MCF 10A (cell line): ENCODE measurements at regions of chr12 and their contacts with region 1.

Region 1: DNA sequence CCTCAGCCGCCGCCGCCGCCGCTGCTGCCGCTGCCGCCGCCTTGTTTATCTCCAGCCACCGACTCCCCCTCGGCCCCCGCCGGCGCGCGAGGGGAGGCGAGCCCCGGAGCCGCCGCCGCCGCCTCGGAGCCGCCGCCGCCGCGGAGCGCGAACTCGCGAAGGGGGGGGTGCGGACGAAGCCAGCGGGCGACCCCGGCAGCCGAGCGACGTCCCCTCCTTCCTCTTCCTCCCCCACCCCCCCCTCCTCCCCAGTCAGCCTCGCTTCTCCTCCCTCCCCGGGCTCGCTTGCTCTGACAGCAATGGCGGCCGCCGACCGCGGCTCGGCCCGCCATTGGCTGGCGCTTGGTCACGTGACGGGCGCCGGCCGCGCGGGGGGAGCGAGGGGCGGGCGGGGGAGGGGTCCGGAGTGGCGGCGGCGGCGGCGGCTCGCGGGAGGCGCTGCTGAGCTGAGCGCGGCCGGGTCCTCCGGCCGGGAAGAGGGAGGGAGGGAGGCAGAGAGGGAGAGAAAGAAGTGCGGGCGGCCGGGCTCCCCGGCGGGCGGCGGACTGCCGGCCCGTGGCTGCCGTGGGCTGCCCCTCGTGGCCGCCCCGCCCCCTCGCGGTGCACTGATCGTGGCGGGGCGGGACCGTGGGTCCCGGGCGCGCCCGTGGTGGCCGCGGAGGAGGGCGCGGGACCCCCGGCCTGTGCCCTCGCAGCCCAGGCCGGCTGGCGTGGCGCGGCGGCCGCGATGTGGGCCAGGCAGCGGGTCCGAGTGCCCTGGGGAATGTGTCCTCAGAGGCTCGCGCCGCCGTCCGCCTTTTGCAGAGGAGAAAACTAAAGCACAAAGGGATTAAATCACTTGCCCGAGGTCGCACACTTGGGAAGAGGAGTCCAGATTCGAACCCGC is at the start of gene MED13L:
- DNase-seq: peak; percentile 84
- H3K4me3 Mint-ChIP-seq: peak within 1 kb of the TSS; percentile 84
- H3K27ac Mint-ChIP-seq: peak within 1 kb of the TSS; percentile 96
- H3K4me1 Mint-ChIP-seq: peaks cover 12% of the 10 kb centered on the region
- H3K27me3 Mint-ChIP-seq: no peaks in the 10 kb centered on the region
- CTCF ChIP-seq: peak; percentile 29
- total RNA-seq, gene MED13L: 74.9 and 91.6 TPM in 2 replicates

Region 2: DNA sequence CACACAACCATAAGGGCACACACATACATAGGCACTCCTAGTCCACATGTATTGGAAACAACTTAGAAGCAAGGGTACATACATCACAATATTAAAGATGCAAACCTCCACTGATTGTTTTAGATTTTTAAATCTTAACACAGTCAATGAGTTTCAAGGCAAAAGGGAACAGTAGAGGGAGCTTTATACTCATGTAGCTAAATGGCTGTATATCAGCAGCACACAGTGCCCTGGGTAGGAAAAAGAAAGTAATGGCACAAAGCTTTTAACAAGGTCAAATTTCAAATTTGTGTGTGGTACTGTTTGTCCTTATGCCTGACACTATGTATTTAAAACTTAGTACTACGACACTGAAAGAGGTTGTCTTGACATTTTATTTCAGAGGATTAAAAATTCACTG is 262.1 kb before region 1 on chr12:
- CTCF ChIA-PET with region 1: interaction called, 3 read pairs
- POLR2A ChIA-PET with region 1: no interaction called
- intact Hi-C with region 1: loop called (anchors 2 kb)
- DNase-seq: peak; percentile 43
- H3K4me3 Mint-ChIP-seq: no peak overlapping the region
- H3K27ac Mint-ChIP-seq: no peak overlapping the region
- H3K4me1 Mint-ChIP-seq: peaks cover 4% of the 10 kb centered on the region
- H3K27me3 Mint-ChIP-seq: no peaks in the 10 kb centered on the region
- CTCF ChIP-seq: peak; percentile 30

Region 3: GRCh38 chr12:116257215-116257614 is 20.4 kb before region 1 on chr12:
- CTCF ChIA-PET with region 1: no interaction called
- POLR2A ChIA-PET with region 1: interaction called, 15 read pairs
- intact Hi-C with region 1: no loop called
- DNase-seq: peak; percentile 45
- H3K4me3 Mint-ChIP-seq: no peak overlapping the region
- H3K27ac Mint-ChIP-seq: no peak overlapping the region
- H3K4me1 Mint-ChIP-seq: peaks cover 13% of the 10 kb centered on the region
- H3K27me3 Mint-ChIP-seq: no peaks in the 10 kb centered on the region
- CTCF ChIP-seq: no peak

Region 4: DNA sequence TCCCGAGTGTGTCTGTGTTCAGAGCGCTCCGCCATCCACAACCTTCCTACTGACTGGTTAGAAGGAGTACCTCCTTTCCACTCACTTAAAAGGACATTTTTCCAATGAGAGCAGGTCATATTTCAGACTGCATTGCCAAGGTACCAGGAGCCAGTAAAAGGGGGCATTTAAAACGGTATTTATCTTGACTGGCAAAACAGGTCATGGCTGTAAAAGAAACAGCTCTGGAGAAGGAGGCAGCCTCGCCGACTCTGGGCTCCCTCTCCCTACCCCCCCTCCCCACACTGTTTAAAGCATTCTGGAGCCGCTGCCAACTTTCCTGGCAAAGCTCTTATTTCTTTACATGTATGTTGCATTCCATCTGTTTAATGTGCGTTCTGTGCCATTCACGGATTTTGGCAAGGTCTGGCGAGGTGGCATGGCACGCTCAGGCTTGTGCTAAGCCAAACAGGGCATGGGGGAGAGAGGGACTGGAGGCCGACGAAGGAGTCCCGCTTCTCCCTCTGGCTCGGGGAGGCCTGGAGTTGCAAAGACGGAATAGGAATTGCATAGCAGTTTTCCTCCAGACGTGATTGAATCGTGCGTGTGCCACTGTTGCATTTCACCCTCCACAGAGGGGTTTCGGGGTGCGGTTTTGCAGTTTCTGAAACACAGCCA is 41.1 kb after region 1 on chr12:
- CTCF ChIA-PET with region 1: interaction called, 4 read pairs
- POLR2A ChIA-PET with region 1: interaction called, 10 read pairs
- intact Hi-C with region 1: no loop called
- DNase-seq: peak; percentile 45
- H3K4me3 Mint-ChIP-seq: peak overlapping the region; percentile 60
- H3K27ac Mint-ChIP-seq: peak overlapping the region; percentile 68
- H3K4me1 Mint-ChIP-seq: peaks cover 32% of the 10 kb centered on the region
- H3K27me3 Mint-ChIP-seq: no peaks in the 10 kb centered on the region
- CTCF ChIP-seq: no peak

Region 5: DNA sequence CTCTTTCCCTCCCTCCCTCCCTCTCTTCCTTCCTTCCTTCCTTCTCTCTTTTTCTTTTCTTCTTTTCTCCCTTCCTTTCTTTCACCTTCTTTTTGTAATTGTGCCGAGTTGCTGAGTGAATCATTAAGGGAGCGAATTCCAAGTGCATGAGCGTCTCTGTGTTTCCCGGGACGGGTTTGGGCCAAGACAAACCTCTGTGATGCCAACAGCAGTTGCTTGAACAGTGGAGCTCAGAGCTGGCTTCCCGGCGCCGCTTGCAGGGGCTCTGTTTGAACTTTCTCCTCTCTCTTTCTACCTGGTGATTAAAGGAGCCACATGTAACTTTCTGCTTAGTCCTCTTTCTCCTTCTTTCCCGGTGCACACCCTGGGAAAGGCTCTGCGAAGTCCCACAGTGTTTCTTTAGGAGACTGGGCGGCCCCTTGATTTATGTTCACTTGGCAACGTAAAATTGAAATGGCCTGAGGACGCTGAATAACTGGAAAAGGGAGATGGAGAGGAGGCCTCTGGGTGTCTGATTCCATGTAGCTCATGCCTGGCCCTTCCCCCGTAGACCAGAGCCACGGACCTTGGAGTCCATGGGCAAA is 247.9 kb after region 1 on chr12:
- CTCF ChIA-PET with region 1: no interaction called
- POLR2A ChIA-PET with region 1: no interaction called
- intact Hi-C with region 1: loop called (anchors 10 kb)
- DNase-seq: peak; percentile 92
- H3K4me3 Mint-ChIP-seq: peak overlapping the region; percentile 63
- H3K27ac Mint-ChIP-seq: peak overlapping the region; percentile 81
- H3K4me1 Mint-ChIP-seq: peaks cover 47% of the 10 kb centered on the region
- H3K27me3 Mint-ChIP-seq: no peaks in the 10 kb centered on the region
- CTCF ChIP-seq: no peak

Region 6: GRCh38 chr12:116708826-116709756 is 431.5 kb after region 1 on chr12:
- CTCF ChIA-PET with region 1: interaction called, 3 read pairs
- POLR2A ChIA-PET with region 1: no interaction called
- intact Hi-C with region 1: loop called (anchors 5 kb)
- DNase-seq: peak; percentile 61
- H3K4me3 Mint-ChIP-seq: no peak overlapping the region
- H3K27ac Mint-ChIP-seq: no peak overlapping the region
- H3K4me1 Mint-ChIP-seq: peaks cover 9% of the 10 kb centered on the region
- H3K27me3 Mint-ChIP-seq: no peaks in the 10 kb centered on the region
- CTCF ChIP-seq: peak; percentile 71